PC-9 (cell line): ENCODE measurements at regions of chr4 and their contacts with region 1.

Region 1: GRCh38 chr4:99062120-99062519 is 26.5 kb downstream of the ADH5 start:
- DNase-seq: no peak
- H3K4me3 ChIP-seq: no peak overlapping the region
- H3K27ac ChIP-seq: no peak overlapping the region
- H3K4me1 ChIP-seq: peaks cover 23% of the 10 kb centered on the region
- H3K27me3 ChIP-seq: no peaks in the 10 kb centered on the region
- CTCF ChIP-seq: no peak

Region 2: DNA sequence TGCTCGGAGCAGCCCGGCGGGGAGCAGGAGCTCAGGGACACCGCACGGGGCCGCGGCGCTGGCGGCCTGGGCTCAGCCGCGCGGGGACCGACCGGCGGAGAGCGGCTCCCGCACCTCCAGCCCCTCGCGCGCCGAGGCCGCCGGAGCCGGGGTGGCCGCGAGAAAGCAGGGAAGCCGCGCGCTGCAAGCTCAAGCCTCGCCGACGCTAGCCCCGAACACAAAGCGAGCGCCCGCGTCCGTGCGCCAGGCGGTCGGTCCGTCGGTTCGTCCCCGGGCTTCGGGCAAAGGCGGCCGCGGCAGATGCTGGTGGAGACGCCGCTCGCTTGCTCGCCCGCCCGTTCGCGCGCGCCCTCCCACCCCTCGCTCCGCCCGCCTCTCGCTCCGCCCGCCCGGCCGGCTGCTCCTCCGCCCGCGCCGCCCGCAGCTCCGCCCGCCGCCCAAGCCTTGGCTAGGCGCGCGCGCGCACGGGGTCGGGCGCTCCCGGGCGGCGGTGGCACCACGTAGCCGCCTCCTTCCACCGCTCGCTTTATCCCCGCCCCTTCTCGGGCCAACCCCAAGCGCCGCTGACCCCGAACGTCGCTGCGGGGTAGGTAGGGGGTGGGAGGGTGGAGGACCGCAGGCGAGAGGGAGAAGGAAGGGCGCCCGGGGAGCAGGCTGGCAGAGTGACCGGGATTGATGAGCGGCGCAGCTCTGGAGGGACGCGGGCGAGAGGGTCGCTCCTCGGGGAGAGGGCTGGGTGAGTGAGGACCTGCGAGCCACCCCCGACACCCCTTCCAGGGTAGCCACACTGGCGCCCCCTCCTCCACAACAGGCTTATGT is 403.6 kb before region 1 on chr4 and contains the start of gene TSPAN5:
- CTCF ChIA-PET with region 1: no interaction called
- POLR2A ChIA-PET with region 1: no interaction called
- intact Hi-C with region 1: loop called (anchors 5 kb)
- DNase-seq: peak; percentile 65 to 78
- H3K4me3 ChIP-seq: peak within 1 kb of the TSS; percentile 95
- H3K27ac ChIP-seq: peak within 1 kb of the TSS; percentile 65
- H3K4me1 ChIP-seq: peaks cover 80% of the 10 kb centered on the region
- H3K27me3 ChIP-seq: no peaks in the 10 kb centered on the region
- CTCF ChIP-seq: no peak
- total RNA-seq, gene TSPAN5: 9.8 and 12.4 TPM in 2 replicates

Region 3: DNA sequence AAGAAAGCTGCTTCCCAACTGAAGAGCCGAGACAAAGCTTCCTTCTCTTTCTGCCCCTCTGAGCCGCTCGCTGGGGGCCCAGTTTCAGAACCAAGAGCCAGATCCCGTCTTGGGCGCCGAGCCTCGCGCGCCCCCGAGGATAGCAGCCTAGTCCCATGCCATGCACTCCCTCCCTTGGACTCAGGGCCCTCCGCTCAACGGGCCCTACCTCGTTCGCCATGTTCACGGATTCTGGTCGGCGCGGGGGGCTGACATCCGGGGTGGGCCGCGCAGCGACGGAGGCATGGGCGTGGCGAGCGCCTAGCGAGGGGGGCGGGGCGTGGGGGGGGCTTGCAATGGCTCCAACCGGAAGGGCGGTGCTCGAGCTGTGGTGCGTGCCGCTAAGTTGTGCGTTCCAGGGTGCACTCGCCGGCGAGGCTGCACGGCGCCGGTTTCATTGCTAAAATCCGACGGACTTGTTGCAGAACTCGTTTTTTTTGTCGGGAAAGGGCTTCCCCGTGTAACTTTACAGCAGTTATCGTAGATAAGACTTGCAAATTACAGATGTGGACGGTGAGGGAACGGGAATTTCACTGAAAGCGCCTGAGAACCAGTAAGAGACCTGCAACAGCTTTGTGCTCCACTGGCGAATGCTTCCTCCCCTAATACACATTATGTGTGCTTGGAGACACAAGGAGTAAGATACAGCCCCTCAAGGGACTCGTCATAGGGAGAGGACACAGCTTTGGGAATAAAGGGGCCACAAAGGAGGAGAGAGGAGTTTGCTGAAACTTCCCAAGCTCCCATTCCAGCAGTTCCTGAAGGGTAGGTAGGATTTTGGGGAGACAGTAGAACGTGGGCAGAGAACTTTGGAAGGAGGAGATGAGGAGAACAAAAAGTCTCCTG is 26.6 kb after region 1 on chr4 and contains the start of gene ADH5:
- CTCF ChIA-PET with region 1: interaction called, 10 read pairs
- POLR2A ChIA-PET with region 1: interaction called, 5 read pairs
- intact Hi-C with region 1: no loop called
- DNase-seq: peak; percentile 65 to 66
- H3K4me3 ChIP-seq: peak within 1 kb of the TSS; percentile 99
- H3K27ac ChIP-seq: peak within 1 kb of the TSS; percentile 71
- H3K4me1 ChIP-seq: peaks cover 17% of the 10 kb centered on the region
- H3K27me3 ChIP-seq: no peaks in the 10 kb centered on the region
- CTCF ChIP-seq: no peak
- total RNA-seq, gene ADH5: 76.9 and 94.7 TPM in 2 replicates

Region 4: DNA sequence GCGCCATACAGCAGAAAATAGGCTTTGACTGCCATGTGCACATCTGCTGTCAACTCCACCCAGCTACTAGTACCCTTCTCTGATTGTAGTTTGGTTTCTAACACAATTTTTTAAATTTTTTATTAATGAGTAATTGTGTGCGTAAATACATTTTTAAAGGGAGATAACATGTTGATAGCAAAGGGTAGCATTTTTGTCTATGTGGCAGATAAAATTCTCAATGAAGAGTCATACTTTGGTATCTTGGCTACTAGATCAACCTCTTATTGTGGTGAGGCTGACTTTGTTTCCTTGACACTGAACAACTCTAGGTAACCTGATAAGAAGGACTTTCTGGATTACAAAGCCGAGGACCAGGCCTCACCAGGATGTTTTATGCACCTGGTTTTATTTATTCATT is 72.5 kb after region 1 on chr4:
- CTCF ChIA-PET with region 1: no interaction called
- POLR2A ChIA-PET with region 1: no interaction called
- intact Hi-C with region 1: no loop called
- DNase-seq: no peak
- H3K4me3 ChIP-seq: no peak overlapping the region
- H3K27ac ChIP-seq: no peak overlapping the region
- H3K4me1 ChIP-seq: no peaks in the 10 kb centered on the region
- H3K27me3 ChIP-seq: no peaks in the 10 kb centered on the region
- CTCF ChIP-seq: no peak

Region 5: GRCh38 chr4:99234331-99235010 is 172.4 kb after region 1 on chr4:
- CTCF ChIA-PET with region 1: no interaction called
- POLR2A ChIA-PET with region 1: no interaction called
- intact Hi-C with region 1: no loop called
- DNase-seq: no peak
- H3K4me3 ChIP-seq: no peak overlapping the region
- H3K27ac ChIP-seq: no peak overlapping the region
- H3K4me1 ChIP-seq: 0 out of 2 replicates have a peak, but pooled peaks cover 3% of the 10 kb centered on the region
- H3K27me3 ChIP-seq: no peaks in the 10 kb centered on the region
- CTCF ChIP-seq: no peak